Activated CD8-positive, alpha-beta T cell treated with anti-CD3 and anti-CD28 coated beads, Interleukin-2, amount 10 ng/mL, durations not matched to agents 7 days and 5 days (primary cell): ENCODE measurements at regions of chr2 and their contacts with region 1.

Region 1: GRCh38 chr2:179129574-179130238 is 79.8 kb upstream of the CCDC141 start:
- DNase-seq: peak; percentile 49
- ATAC-seq: no peak
- H3K4me3 Mint-ChIP-seq: no peak overlapping the region
- H3K27ac Mint-ChIP-seq: no peak overlapping the region
- H3K4me1 Mint-ChIP-seq: no peaks in the 10 kb centered on the region
- H3K27me3 Mint-ChIP-seq: no peaks in the 10 kb centered on the region

Region 2: GRCh38 chr2:178761759-178762371 is 367.8 kb before region 1 on chr2:
- CTCF ChIA-PET with region 1: interaction called, 17 read pairs
- POLR2A ChIA-PET with region 1: no interaction called
- DNase-seq: peak; percentile 56
- ATAC-seq: peak; percentile 39
- H3K4me3 Mint-ChIP-seq: no peak overlapping the region
- H3K27ac Mint-ChIP-seq: no peak overlapping the region
- H3K4me1 Mint-ChIP-seq: peaks cover 2% of the 10 kb centered on the region
- H3K27me3 Mint-ChIP-seq: no peaks in the 10 kb centered on the region

Region 3: GRCh38 chr2:178796079-178796677 is 333.5 kb before region 1 on chr2:
- CTCF ChIA-PET with region 1: interaction called, 23 read pairs
- POLR2A ChIA-PET with region 1: no interaction called
- DNase-seq: no peak
- ATAC-seq: no peak
- H3K4me3 Mint-ChIP-seq: no peak overlapping the region
- H3K27ac Mint-ChIP-seq: no peak overlapping the region
- H3K4me1 Mint-ChIP-seq: no peaks in the 10 kb centered on the region
- H3K27me3 Mint-ChIP-seq: no peaks in the 10 kb centered on the region

Region 4: DNA sequence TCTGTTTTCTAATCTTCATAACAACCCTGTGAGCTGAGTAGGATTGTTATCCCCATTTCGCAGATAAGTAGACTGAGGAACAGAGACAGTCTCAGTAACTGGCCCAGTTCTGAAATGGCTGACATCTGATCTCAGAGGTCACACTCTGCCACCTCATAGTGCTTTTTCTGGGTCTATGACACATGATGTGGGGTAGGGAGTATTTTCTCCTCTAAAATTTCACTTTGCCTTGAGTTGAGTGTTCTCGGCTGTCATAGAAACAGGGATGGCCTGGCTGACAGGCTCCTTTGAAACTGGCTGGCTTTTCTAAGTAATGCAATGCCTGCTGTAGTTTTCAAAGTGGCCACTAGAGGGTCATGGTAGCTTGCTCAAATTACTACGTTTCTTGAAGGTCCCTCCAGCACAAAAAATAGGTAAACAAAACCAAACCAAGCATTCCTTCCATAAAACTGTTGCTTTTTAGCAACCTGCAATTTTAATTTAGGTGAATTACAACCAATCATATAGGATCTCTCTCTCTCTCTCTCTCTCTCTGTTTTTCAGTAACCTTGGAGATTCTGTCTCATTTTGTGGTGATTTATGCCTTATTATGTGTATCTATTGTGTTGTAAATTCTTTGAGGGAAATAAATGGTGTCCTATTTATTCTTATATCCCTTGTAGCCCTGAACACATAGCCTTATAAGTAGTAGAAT is 238.3 kb before region 1 on chr2:
- CTCF ChIA-PET with region 1: interaction called, 51 read pairs
- POLR2A ChIA-PET with region 1: no interaction called
- DNase-seq: peak; percentile 81
- ATAC-seq: peak; percentile 85
- H3K4me3 Mint-ChIP-seq: no peak overlapping the region
- H3K27ac Mint-ChIP-seq: no peak overlapping the region
- H3K4me1 Mint-ChIP-seq: peaks cover 7% of the 10 kb centered on the region
- H3K27me3 Mint-ChIP-seq: no peaks in the 10 kb centered on the region

Region 5: GRCh38 chr2:178914259-178914849 is 215.4 kb before region 1 on chr2:
- CTCF ChIA-PET with region 1: interaction called, 34 read pairs
- POLR2A ChIA-PET with region 1: no interaction called
- DNase-seq: peak; percentile 86
- ATAC-seq: peak; percentile 78
- H3K4me3 Mint-ChIP-seq: no peak overlapping the region
- H3K27ac Mint-ChIP-seq: peak overlapping the region; percentile 62
- H3K4me1 Mint-ChIP-seq: peaks cover 20% of the 10 kb centered on the region
- H3K27me3 Mint-ChIP-seq: no peaks in the 10 kb centered on the region

Region 6: GRCh38 chr2:179049546-179050311 is 80.0 kb before region 1 on chr2 and contains the start of gene CCDC141:
- CTCF ChIA-PET with region 1: interaction called, 20 read pairs
- POLR2A ChIA-PET with region 1: no interaction called
- DNase-seq: peak; percentile 59
- ATAC-seq: peak; percentile 80
- H3K4me3 Mint-ChIP-seq: peak within 1 kb of the TSS; percentile 85
- H3K27ac Mint-ChIP-seq: peak within 1 kb of the TSS; percentile 93
- H3K4me1 Mint-ChIP-seq: peaks cover 60% of the 10 kb centered on the region
- H3K27me3 Mint-ChIP-seq: no peaks in the 10 kb centered on the region
- total RNA-seq, gene CCDC141: 17.0 to 19.5 TPM

Region 7: GRCh38 chr2:179106676-179107428 is 22.9 kb before region 1 on chr2:
- CTCF ChIA-PET with region 1: interaction called, 12 read pairs
- POLR2A ChIA-PET with region 1: no interaction called
- DNase-seq: no peak
- ATAC-seq: peak; percentile 45
- H3K4me3 Mint-ChIP-seq: peak overlapping the region; percentile 10
- H3K27ac Mint-ChIP-seq: peak overlapping the region; percentile 71
- H3K4me1 Mint-ChIP-seq: peaks cover 41% of the 10 kb centered on the region
- H3K27me3 Mint-ChIP-seq: no peaks in the 10 kb centered on the region

Region 8: DNA sequence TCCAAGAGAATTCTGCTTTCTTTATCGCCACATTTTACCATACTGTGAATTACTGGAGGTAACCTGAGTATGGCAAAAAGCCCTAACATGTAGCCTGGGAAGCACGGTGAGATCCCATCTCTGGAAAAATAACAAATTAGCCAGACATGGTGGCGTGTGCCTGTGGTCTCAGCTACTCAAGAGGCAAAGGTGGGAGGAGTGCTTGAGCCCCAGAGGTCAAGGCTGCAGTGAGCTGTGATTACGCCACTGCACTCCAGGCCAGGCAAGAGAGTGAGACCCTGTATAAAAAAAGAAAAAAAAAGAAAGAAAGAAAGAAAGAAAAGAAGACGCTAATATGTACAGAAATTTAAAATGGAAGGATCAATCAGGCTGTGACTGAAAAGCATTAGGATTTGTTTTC is 192.6 kb after region 1 on chr2:
- CTCF ChIA-PET with region 1: no interaction called
- POLR2A ChIA-PET with region 1: no interaction called
- DNase-seq: no peak
- ATAC-seq: no peak
- H3K4me3 Mint-ChIP-seq: no peak overlapping the region
- H3K27ac Mint-ChIP-seq: no peak overlapping the region
- H3K4me1 Mint-ChIP-seq: no peaks in the 10 kb centered on the region
- H3K27me3 Mint-ChIP-seq: peaks cover 8% of the 10 kb centered on the region

Region 9: DNA sequence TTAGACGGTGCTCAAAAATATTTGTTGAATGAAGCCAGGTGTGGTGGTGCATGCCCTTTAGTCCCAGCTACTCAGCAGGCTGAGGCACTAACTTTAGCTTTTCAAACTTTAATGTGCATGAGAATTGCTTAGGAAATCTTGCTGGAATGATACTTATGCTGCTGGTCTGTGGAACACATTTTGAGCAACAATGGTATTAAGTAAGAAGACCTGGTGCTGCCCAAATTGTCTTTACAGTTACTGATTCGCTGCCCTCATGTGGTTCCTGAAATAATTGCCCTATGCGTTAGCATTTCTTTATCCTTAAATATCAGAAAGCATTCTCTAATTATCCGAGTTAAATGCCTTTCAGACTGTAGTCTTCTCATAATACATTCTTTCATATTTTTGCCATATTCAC is 211.0 kb after region 1 on chr2:
- CTCF ChIA-PET with region 1: no interaction called
- POLR2A ChIA-PET with region 1: no interaction called
- DNase-seq: no peak
- ATAC-seq: no peak
- H3K4me3 Mint-ChIP-seq: no peak overlapping the region
- H3K27ac Mint-ChIP-seq: no peak overlapping the region
- H3K4me1 Mint-ChIP-seq: no peaks in the 10 kb centered on the region
- H3K27me3 Mint-ChIP-seq: no peaks in the 10 kb centered on the region